Activated CD4-positive, alpha-beta T cell treated with anti-CD3 and anti-CD28 coated beads for 36 hours (primary cell): ENCODE measurements at regions of chr3 and their contacts with region 1.

Region 1: GRCh38 chr3:109532257-109533216 is 195.2 kb upstream of the DPPA4 start:
- DNase-seq: peak; percentile 69
- ATAC-seq: no peak
- H3K4me3 Mint-ChIP-seq: no peak overlapping the region
- H3K27ac Mint-ChIP-seq: no peak overlapping the region
- H3K4me1 Mint-ChIP-seq: no peaks in the 10 kb centered on the region
- H3K27me3 Mint-ChIP-seq: peaks cover 3% of the 10 kb centered on the region

Region 2: GRCh38 chr3:111080413-111080812 is 1547.9 kb after region 1 on chr3:
- CTCF ChIA-PET with region 1: no interaction called
- POLR2A ChIA-PET with region 1: no interaction called
- intact Hi-C with region 1: loop called in 1 of 2 experiments (anchors 10 kb)
- DNase-seq: no peak
- ATAC-seq: no peak
- H3K4me3 Mint-ChIP-seq: no peak overlapping the region
- H3K27ac Mint-ChIP-seq: no peak overlapping the region
- H3K4me1 Mint-ChIP-seq: no peaks in the 10 kb centered on the region
- H3K27me3 Mint-ChIP-seq: peaks cover 3% of the 10 kb centered on the region